ENCODE measurements at regions of chr16 and their contacts with region 1.

Region 1: GRCh38 chr16:11797166-11797956 is at the start of gene ZC3H7A:
- DNase-seq: peak; percentile 97
- H3K4me3 ChIP-seq: peak within 1 kb of the TSS; percentile 80 to 98 (median 82)
- H3K27ac ChIP-seq: peak within 1 kb of the TSS; percentile 92
- H3K4me1 ChIP-seq: peaks cover 47% of the 10 kb centered on the region
- H3K27me3 ChIP-seq: no peaks in the 10 kb centered on the region
- CTCF ChIP-seq: peak; percentile 39 to 43
- total RNA-seq, gene ZC3H7A: 42.5 to 64.1 TPM

Region 2: GRCh38 chr16:11308493-11309283 is 488.7 kb before region 1 on chr16:
- CTCF ChIA-PET with region 1: no interaction called
- dilution Hi-C with region 1: no loop called
- in situ Hi-C with region 1: no loop called
- intact Hi-C with region 1: no loop called
- DNase-seq: no peak
- H3K4me3 ChIP-seq: no peak overlapping the region
- H3K27ac ChIP-seq: no peak overlapping the region
- H3K4me1 ChIP-seq: peaks cover 6% of the 10 kb centered on the region
- H3K27me3 ChIP-seq: no peaks in the 10 kb centered on the region
- CTCF ChIP-seq: no peak

Region 3: GRCh38 chr16:11396241-11397048 is 400.9 kb before region 1 on chr16:
- CTCF ChIA-PET with region 1: no interaction called
- dilution Hi-C with region 1: no loop called
- in situ Hi-C with region 1: loop called (anchors 25 kb)
- intact Hi-C with region 1: no loop called
- DNase-seq: peak; percentile 39
- H3K4me3 ChIP-seq: no peak overlapping the region
- H3K27ac ChIP-seq: no peak overlapping the region
- H3K4me1 ChIP-seq: no peaks in the 10 kb centered on the region
- H3K27me3 ChIP-seq: no peaks in the 10 kb centered on the region
- CTCF ChIP-seq: peak; percentile 96 to 98

Region 4: GRCh38 chr16:11658894-11659708 is 138.3 kb before region 1 on chr16:
- CTCF ChIA-PET with region 1: interaction called, 15 read pairs
- dilution Hi-C with region 1: no loop called
- in situ Hi-C with region 1: no loop called
- intact Hi-C with region 1: no loop called
- DNase-seq: peak; percentile 85
- H3K4me3 ChIP-seq: peak overlapping the region in 2 of 3 experiments; percentile 15 to 40
- H3K27ac ChIP-seq: peak overlapping the region; percentile 46
- H3K4me1 ChIP-seq: peaks cover 19% of the 10 kb centered on the region
- H3K27me3 ChIP-seq: no peaks in the 10 kb centered on the region
- CTCF ChIP-seq: no peak

Region 5: GRCh38 chr16:11667824-11668622 is 129.3 kb before region 1 on chr16 and contains the start of gene SNN:
- CTCF ChIA-PET with region 1: no interaction called
- dilution Hi-C with region 1: no loop called
- in situ Hi-C with region 1: no loop called
- intact Hi-C with region 1: loop called (anchors 1 kb)
- DNase-seq: peak; percentile 79
- H3K4me3 ChIP-seq: peak within 1 kb of the TSS; percentile 65 to 90 (median 85)
- H3K27ac ChIP-seq: no peak within 1 kb of the TSS
- H3K4me1 ChIP-seq: peaks cover 49% of the 10 kb centered on the region
- H3K27me3 ChIP-seq: no peaks in the 10 kb centered on the region
- CTCF ChIP-seq: no peak
- total RNA-seq, gene SNN: 14.2 to 32.7 TPM

Region 6: DNA sequence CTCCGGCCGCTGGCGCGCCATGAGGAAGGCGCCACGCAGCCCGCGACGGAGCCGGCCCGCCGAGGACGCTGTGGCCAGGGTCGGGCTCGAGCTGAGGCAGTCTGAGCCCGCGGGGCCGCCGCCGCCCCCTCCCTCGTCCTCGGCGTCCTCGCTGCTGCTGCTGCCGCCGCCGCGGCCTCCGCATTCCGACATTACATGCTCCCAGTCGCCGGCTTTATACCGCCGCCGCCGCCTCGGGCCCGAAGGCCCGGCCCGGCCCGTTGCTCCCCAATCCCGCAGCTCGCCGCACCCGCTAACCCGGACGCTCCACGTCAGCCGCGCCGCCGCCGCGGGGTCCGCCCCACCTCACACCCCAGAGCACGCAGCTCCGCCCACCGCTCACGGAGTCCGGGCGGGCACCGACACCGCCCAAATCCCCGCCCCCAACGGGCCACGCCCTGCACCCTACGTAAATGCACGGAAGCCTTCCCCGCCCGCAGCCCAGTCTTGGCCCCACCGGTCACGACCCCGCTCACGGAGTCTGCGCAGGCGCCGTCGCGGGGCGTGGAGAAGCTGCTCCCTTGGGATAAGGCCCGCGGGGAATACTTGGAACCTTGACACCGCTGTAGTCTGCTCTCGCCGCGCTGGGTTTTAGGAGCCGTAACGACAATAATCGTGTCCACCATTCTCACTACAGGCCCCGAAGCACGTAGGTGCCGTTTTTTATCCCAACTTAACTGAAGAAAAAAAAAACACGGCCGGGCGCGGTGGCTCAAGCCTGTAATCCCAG is 54.6 kb before region 1 on chr16 and contains the start of gene TXNDC11:
- CTCF ChIA-PET with region 1: interaction called, 5 read pairs
- dilution Hi-C with region 1: no loop called
- in situ Hi-C with region 1: no loop called
- intact Hi-C with region 1: loop called (anchors 2 kb)
- DNase-seq: peak; percentile 98
- H3K4me3 ChIP-seq: peak within 1 kb of the TSS; percentile 63 to 93 (median 88)
- H3K27ac ChIP-seq: peak within 1 kb of the TSS; percentile 85
- H3K4me1 ChIP-seq: peaks cover 18% of the 10 kb centered on the region
- H3K27me3 ChIP-seq: no peaks in the 10 kb centered on the region
- CTCF ChIP-seq: no peak
- total RNA-seq, gene TXNDC11: 26.0 to 30.7 TPM

Region 7: DNA sequence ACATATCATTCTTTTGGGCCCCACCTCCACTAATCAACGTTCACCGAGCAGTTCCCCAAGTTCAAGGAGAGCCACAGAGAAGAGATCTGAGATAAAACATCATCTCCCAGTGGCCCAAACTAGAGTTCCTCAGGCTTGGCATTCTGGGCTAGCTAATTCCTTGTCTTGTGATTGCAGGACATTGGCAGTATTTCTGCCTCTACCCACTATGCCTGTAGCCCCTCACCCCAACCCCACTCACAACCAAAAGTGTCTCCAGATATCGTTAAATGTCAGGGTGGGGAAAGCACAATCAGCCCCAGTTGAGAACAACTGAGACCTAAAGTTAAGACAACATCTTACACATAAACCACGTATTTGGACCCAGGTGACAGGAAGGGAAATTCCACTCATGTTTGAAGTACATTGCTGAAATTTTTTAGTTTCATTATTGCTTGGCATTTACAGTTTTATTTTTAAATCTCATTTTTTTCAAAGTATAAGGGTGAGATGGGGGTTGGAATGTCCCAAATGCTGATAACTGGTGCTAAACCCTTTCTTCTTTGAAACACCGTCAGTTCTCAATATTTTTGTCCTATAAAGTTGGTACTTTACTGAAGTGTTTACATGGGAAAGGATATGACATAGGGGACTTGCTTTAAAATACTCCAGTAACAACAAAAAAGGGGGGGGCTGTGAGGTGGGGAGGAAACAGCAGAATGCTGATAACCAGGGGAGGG is 13.9 kb before region 1 on chr16:
- CTCF ChIA-PET with region 1: interaction called, 6 read pairs
- dilution Hi-C with region 1: no loop called
- in situ Hi-C with region 1: no loop called
- intact Hi-C with region 1: loop called (anchors 1 kb)
- DNase-seq: peak; percentile 58
- H3K4me3 ChIP-seq: peak overlapping the region in 2 of 3 experiments; percentile 12 to 35
- H3K27ac ChIP-seq: peak overlapping the region; percentile 92
- H3K4me1 ChIP-seq: peaks cover 34% of the 10 kb centered on the region
- H3K27me3 ChIP-seq: no peaks in the 10 kb centered on the region
- CTCF ChIP-seq: no peak

Measured in mammary epithelial cell (primary cell).